ENCODE measurements at regions of chr4 and their contacts with region 1.

Region 1: DNA sequence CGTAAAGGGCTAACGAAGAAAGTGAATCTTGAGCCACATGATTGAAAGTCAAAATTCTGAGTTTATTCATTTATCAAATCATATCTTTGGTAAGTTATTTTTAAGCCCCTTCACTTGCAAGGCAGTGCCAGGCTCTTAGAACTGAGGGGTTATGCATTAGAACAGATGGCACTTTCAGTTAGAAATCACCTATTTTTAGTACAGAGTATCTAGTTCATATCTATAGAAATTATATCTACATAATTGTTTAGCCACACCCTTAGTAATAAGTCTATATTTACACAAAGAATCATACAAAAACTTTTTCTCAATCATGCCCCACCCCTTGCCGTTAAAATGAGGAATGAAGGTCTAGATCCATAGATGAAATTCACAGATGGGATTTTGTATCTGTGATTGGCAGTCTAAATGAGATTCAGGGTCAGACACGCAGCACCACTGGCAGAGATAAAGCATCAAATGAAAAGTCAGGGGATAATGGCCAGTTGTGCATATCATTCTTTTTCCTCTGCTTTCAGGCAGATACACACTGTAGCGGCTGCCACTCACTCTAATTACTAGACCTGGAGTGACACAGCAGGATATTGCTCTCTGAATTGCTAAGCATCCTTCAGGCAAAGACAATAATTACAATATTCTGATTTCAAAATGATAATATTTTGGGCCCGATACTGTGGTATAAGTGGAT is 440.5 kb downstream of the MAPK10 start:
- DNase-seq: no peak

Region 2: DNA sequence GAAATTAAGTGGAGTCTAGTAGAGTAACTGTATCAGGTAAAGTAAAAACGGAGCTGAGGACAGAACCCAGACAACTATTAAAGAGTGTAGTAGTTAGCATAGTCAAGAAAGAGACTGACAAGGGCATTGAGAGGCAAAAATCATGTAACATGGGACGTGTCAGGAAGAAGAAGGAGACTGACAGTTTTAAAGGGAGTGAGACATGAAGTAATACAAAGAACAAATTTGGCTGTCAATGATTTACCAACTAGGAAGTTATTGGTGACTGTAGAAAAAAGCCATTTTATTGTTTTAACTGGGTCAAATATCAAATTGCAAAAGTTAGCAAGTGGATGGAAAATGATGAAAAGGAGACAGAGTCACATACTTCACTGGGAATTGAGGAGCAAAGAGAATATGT is 18.2 kb after region 1 on chr4:
- intact Hi-C with region 1: loop called in 1 of 2 experiments (anchors 2 kb)
- DNase-seq: no peak